ENCODE measurements at regions of chr19 and their contacts with region 1.

Region 1: GRCh38 chr19:46860125-46860845 is 512 bp upstream of the ARHGAP35 start:
- DNase-seq: peak; percentile 97
- H3K4me3 Mint-ChIP-seq: peak overlapping the region; percentile 77
- H3K27ac Mint-ChIP-seq: peak overlapping the region; percentile 88
- H3K4me1 Mint-ChIP-seq: peaks cover 26% of the 10 kb centered on the region
- H3K27me3 Mint-ChIP-seq: no peaks in the 10 kb centered on the region

Region 2: GRCh38 chr19:46803555-46803954 is 56.7 kb before region 1 on chr19:
- CTCF ChIA-PET with region 1: no interaction called
- POLR2A ChIA-PET with region 1: no interaction called
- DNase-seq: no peak
- H3K4me3 Mint-ChIP-seq: no peak overlapping the region
- H3K27ac Mint-ChIP-seq: no peak overlapping the region
- H3K4me1 Mint-ChIP-seq: no peaks in the 10 kb centered on the region
- H3K27me3 Mint-ChIP-seq: no peaks in the 10 kb centered on the region

Region 3: GRCh38 chr19:46990991-46991676 is 130.8 kb after region 1 on chr19:
- CTCF ChIA-PET with region 1: interaction called, 20 read pairs
- POLR2A ChIA-PET with region 1: interaction called, 9 read pairs
- DNase-seq: peak; percentile 68
- H3K4me3 Mint-ChIP-seq: no peak overlapping the region
- H3K27ac Mint-ChIP-seq: peak overlapping the region; percentile 56
- H3K4me1 Mint-ChIP-seq: peaks cover 24% of the 10 kb centered on the region
- H3K27me3 Mint-ChIP-seq: no peaks in the 10 kb centered on the region

Measured in activated CD4-positive, alpha-beta memory T cell treated with anti-CD3 and anti-CD28 coated beads, Interleukin-2, amount 10 ng/mL, durations not matched to agents 7 days and 5 days (primary cell).